ENCODE measurements at regions of chr7 and their contacts with region 1.

Region 1: GRCh38 chr7:82605247-82605872 is 161.8 kb upstream of the CACNA2D1 start:
- DNase-seq: peak; percentile 65
- H3K4me3 ChIP-seq: no peak overlapping the region; a peak in 1 of 4 replicates
- H3K27ac ChIP-seq: no peak overlapping the region
- H3K4me1 ChIP-seq: no peaks in the 10 kb centered on the region
- H3K27me3 ChIP-seq: no peaks in the 10 kb centered on the region
- CTCF ChIP-seq: peak; percentile 99
- EP300 ChIP-seq: 0 out of 4 replicates have a peak, but pooled peaks of 1 of the 2 experiments have one; percentile 6
- RAD21 ChIP-seq: peak; percentile 96

Region 2: DNA sequence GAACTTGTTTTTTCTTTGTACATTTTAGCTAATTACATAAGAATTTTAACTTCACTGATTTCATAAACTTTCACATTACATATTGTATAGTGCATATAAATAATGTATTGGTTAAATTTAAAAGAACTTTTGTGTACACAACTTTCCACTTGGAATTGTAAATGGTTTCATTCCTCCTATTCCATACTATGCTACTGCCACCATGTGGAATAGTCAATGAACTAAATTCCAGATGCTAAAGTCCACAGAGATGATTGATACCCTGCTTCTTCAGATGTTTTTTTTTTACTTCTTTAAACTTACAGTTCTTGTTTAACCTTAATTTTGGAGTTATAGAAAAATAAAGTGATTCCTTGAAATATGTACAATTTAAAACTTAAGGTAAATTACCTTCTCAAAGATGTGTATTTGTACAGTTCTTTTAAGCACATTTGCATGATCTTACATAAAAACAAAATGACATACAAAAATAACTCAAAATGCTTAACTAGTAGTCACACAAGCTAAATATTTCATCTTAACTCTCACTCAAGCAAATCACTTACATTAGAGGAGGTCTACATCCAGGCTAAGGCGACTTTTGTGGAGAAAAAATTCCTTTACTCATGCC is 587.9 kb before region 1 on chr7:
- CTCF ChIA-PET with region 1: interaction called, 20 read pairs
- POLR2A ChIA-PET with region 1: no interaction called
- DNase-seq: peak; percentile 33
- H3K4me3 ChIP-seq: no peak overlapping the region
- H3K27ac ChIP-seq: peak overlapping the region in 1 of 2 experiments; percentile 28; a peak in 2 of 4 replicates
- H3K4me1 ChIP-seq: peaks cover 13 to 19% of the 10 kb centered on the region in 2 experiments
- H3K27me3 ChIP-seq: no peaks in the 10 kb centered on the region
- CTCF ChIP-seq: peak; percentile 94
- EP300 ChIP-seq: no peak
- RAD21 ChIP-seq: peak; percentile 92

Region 3: DNA sequence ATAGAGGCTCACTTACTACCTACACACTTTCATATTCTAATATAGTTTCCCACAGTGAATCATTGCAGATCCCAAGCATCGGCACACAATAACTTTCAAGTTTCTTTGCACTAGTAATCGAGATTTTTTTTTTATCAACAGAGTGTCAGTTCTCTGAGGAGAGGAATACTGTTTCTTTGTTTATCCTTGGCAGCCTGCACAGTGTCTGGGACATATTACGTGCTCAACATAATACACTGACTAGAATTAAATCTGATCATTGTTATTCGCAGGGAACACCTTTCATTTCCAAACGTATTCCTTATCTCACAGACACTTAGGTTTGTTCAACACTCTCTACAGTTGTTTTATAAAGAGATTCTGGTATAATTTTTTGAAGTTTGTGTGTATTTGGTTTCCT is 257.1 kb before region 1 on chr7:
- CTCF ChIA-PET with region 1: no interaction called
- POLR2A ChIA-PET with region 1: no interaction called
- DNase-seq: no peak
- H3K4me3 ChIP-seq: no peak overlapping the region
- H3K27ac ChIP-seq: peak overlapping the region in 1 of 2 experiments; percentile 53; a peak in 2 of 4 replicates
- H3K4me1 ChIP-seq: peaks cover 0 to 22% of the 10 kb centered on the region in 2 experiments; a peak in 3 of 4 replicates
- H3K27me3 ChIP-seq: no peaks in the 10 kb centered on the region
- CTCF ChIP-seq: no peak
- EP300 ChIP-seq: no peak
- RAD21 ChIP-seq: no peak

Region 4: DNA sequence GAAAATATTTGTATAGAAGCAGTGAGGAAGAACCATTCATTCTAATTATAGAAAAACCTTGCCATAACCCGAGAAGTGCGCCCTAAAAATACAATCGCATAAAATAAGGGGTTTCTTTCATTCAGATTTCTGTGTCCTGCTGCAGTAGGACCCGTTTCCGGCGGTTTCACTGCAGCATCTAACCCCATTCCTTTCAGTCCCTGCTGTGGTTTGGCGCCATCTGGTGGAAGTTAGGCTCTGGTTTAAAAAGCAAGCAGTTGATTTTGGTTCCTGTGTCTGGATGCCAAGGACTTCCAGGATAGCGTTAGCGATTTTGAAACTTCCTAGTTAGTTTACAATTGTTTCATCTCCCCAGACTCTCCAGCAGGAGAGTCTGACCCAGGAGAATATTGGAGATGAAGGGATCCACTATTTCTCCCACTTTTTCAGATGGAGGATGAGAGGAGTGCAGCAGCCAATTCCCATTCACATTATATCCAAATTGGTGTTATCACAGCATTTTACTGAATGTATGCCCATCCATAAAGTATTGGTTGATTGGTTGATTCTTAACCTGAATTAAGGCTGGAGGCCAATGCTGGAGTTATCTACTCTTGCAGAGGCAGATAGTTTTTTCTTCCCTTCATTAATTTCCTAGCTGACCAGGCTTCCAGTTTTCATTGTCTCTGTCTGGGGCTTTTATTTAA is 33.0 kb before region 1 on chr7:
- CTCF ChIA-PET with region 1: interaction called, 11 read pairs
- POLR2A ChIA-PET with region 1: no interaction called
- DNase-seq: peak; percentile 89
- H3K4me3 ChIP-seq: peak overlapping the region; percentile 18 to 27; a peak in 2 of 4 replicates
- H3K27ac ChIP-seq: peak overlapping the region in 1 of 2 experiments; percentile 25; a peak in 1 of 4 replicates
- H3K4me1 ChIP-seq: peaks cover 4 to 11% of the 10 kb centered on the region in 2 experiments; a peak in 2 of 4 replicates
- H3K27me3 ChIP-seq: no peaks in the 10 kb centered on the region
- CTCF ChIP-seq: peak; percentile 100
- EP300 ChIP-seq: peak in 1 of 2 experiments; percentile 52; a peak in 2 of 4 replicates
- RAD21 ChIP-seq: peak; percentile 100

Region 5: GRCh38 chr7:82615527-82615926 is 10.2 kb after region 1 on chr7:
- CTCF ChIA-PET with region 1: interaction called, 15 read pairs
- POLR2A ChIA-PET with region 1: no interaction called
- DNase-seq: no peak
- H3K4me3 ChIP-seq: no peak overlapping the region
- H3K27ac ChIP-seq: no peak overlapping the region
- H3K4me1 ChIP-seq: no peaks in the 10 kb centered on the region
- H3K27me3 ChIP-seq: no peaks in the 10 kb centered on the region
- CTCF ChIP-seq: no peak
- EP300 ChIP-seq: no peak
- RAD21 ChIP-seq: no peak

Region 6: GRCh38 chr7:82722946-82723345 is 117.6 kb after region 1 on chr7:
- CTCF ChIA-PET with region 1: interaction called, 25 read pairs
- POLR2A ChIA-PET with region 1: no interaction called
- DNase-seq: no peak
- H3K4me3 ChIP-seq: no peak overlapping the region
- H3K27ac ChIP-seq: no peak overlapping the region
- H3K4me1 ChIP-seq: peaks cover 0 to 8% of the 10 kb centered on the region in 2 experiments; a peak in 2 of 4 replicates
- H3K27me3 ChIP-seq: no peaks in the 10 kb centered on the region
- CTCF ChIP-seq: no peak
- EP300 ChIP-seq: no peak
- RAD21 ChIP-seq: no peak